Activated CD8-positive, alpha-beta T cell treated with anti-CD3 and anti-CD28 coated beads, Interleukin-2, amount 10 ng/mL, durations not matched to agents 7 days and 5 days (primary cell): ENCODE measurements at regions of chr12 and their contacts with region 1.

Region 1: DNA sequence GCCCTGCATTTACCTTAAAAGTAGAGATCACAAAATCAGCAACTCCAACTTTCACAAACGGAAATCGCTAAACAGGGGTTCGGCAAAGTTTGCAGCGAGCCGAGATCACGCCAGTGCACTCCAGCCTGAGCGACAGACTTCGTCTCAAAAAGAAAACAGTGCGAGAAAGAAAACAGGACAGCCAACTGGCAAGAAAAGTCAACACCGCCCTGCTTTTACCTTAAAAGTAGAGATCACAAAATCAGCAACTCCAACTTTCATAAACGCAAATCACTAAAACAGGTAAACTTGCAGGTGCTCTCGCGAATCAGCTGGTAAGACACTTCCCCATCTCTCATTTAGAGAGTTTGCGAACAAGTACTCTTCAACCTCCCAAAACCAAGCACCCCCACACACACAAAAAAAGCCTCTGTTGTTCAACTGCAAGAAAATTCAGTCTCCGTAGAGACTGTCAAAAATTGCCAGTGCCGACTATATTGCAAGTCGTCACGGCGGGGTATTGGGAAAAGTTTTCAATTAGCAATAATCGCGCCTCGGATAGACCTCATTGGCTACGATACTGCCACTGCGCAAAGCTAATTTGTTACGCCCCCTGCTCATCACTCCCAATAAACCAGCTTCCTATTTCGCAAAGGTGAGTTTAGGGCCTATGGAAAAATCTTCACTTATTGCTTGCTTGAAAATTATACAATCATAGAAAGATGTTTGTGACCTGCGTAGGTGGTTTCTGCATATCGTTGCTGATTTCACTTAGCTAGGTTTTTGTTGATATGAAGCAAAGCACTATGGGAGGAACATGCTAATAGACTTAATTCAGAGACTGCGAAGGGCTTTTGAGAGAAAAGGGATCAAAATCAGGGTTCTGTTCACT is at the start of gene RNU4-1:
- DNase-seq: peak; percentile 88
- ATAC-seq: peak; percentile 50
- H3K4me3 Mint-ChIP-seq: no peak within 1 kb of the TSS
- H3K27ac Mint-ChIP-seq: no peak within 1 kb of the TSS
- H3K4me1 Mint-ChIP-seq: peaks cover 5% of the 10 kb centered on the region
- H3K27me3 Mint-ChIP-seq: no peaks in the 10 kb centered on the region
- total RNA-seq, gene RNU4-1: 1,409 to 2,335 TPM

Region 2: GRCh38 chr12:119704065-119704747 is 588.7 kb before region 1 on chr12:
- CTCF ChIA-PET with region 1: no interaction called
- POLR2A ChIA-PET with region 1: no interaction called
- DNase-seq: no peak
- ATAC-seq: no peak
- H3K4me3 Mint-ChIP-seq: no peak overlapping the region
- H3K27ac Mint-ChIP-seq: no peak overlapping the region
- H3K4me1 Mint-ChIP-seq: no peaks in the 10 kb centered on the region
- H3K27me3 Mint-ChIP-seq: no peaks in the 10 kb centered on the region

Region 3: GRCh38 chr12:119988782-119989668 is 303.9 kb before region 1 on chr12 and contains the start of gene BICDL1:
- CTCF ChIA-PET with region 1: no interaction called
- POLR2A ChIA-PET with region 1: interaction called, 17 read pairs
- DNase-seq: peak; percentile 97
- ATAC-seq: peak; percentile 87
- H3K4me3 Mint-ChIP-seq: peak within 1 kb of the TSS; percentile 86
- H3K27ac Mint-ChIP-seq: peak within 1 kb of the TSS; percentile 80
- H3K4me1 Mint-ChIP-seq: peaks cover 34% of the 10 kb centered on the region
- H3K27me3 Mint-ChIP-seq: peaks cover 2% of the 10 kb centered on the region
- total RNA-seq, gene BICDL1: 62.4 to 64.8 TPM

Region 4: DNA sequence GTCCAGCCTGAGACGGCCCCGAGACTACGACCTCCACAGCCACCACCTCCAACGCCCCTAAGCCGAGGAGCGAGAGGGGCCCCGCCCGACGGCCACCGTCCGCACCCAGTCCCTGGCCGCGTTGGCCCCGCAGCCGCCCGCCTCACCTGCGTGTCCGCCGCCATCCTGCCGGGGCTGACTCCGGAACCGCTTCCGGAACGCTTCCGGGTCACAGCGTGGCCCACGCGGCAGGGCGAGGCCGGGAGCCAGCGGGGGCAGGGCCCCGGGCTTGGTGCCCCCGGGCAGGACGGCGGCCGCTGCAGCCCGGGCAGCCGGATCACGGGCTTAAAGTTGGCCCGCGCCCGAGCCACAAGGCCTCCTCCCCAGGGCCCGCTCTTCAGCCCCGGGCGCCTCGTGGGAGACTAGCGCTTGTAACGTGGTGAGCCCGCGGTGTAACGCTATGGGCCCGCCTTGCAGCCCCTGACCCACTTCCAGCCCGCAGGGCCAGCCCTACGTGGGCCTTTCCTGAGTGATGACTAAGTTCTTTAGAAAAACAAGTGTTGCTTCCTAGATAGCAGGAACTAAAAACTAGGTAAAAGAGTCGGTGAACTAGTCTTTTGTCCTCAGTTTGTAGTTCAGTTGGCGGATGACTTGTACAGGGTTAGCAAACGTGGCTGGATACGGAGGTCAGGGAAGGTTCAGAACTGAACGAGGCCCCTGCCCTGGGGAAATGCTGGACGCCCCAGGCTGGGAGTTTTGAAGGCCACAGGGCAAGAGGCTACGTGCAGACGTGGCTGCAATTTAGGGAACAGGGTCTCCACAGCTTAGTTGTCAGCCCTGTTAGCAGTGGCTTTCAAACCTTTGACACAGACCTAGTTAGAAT is 98.1 kb before region 1 on chr12 and contains the start of gene GCN1:
- CTCF ChIA-PET with region 1: no interaction called
- POLR2A ChIA-PET with region 1: interaction called, 164 read pairs
- DNase-seq: peak; percentile 88
- ATAC-seq: peak; percentile 84
- H3K4me3 Mint-ChIP-seq: peak within 1 kb of the TSS; percentile 89
- H3K27ac Mint-ChIP-seq: peak within 1 kb of the TSS; percentile 93
- H3K4me1 Mint-ChIP-seq: peaks cover 57% of the 10 kb centered on the region
- H3K27me3 Mint-ChIP-seq: no peaks in the 10 kb centered on the region
- total RNA-seq, gene GCN1: 109 to 112 TPM

Region 5: GRCh38 chr12:120228291-120229070 is 64.4 kb before region 1 on chr12:
- CTCF ChIA-PET with region 1: interaction called, 89 read pairs
- POLR2A ChIA-PET with region 1: interaction called, 329 read pairs
- DNase-seq: peak; percentile 91
- ATAC-seq: peak; percentile 83
- H3K4me3 Mint-ChIP-seq: peak overlapping the region; percentile 40
- H3K27ac Mint-ChIP-seq: peak overlapping the region; percentile 85
- H3K4me1 Mint-ChIP-seq: peaks cover 90% of the 10 kb centered on the region
- H3K27me3 Mint-ChIP-seq: no peaks in the 10 kb centered on the region

Region 6: DNA sequence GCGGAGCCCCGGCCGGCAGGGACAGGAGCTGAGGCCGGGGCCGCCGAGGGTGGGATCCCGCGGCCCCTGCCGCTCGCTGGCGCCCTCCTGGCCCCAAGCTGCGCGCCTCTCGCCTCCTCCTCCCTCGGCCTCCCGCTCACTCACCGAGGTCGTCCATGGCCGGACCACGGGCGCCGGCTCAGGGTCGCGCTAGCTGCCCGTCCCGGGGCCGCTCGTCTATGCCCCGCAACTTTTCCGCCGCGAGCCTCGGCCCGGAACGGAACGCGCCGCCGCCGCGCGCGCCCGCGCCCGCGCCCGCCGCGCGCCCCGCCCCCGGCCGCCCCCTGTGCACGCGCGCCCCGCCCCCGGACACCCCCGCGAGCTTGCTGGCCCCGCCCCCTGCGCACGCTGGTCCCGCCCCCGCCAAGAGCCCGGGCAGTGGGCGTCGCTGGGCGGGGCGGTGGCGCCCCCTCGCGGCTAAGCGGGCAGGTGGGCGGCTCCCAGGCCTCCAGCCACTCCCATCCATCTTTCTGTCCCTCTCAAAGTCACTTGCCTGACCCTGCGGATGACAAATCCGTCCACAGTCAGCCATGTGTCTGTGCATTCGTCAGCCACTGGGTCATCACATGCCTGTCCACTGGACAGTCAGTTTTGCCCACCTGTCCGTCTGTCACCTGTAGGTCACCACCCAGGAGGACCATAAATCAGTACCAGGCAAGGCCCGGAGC is 27.3 kb before region 1 on chr12 and contains the start of gene PXN:
- CTCF ChIA-PET with region 1: interaction called, 8 read pairs
- POLR2A ChIA-PET with region 1: interaction called, 224 read pairs
- DNase-seq: peak; percentile 92
- ATAC-seq: peak; percentile 92
- H3K4me3 Mint-ChIP-seq: peak within 1 kb of the TSS; percentile 81
- H3K27ac Mint-ChIP-seq: peak within 1 kb of the TSS; percentile 77
- H3K4me1 Mint-ChIP-seq: peaks cover 47% of the 10 kb centered on the region
- H3K27me3 Mint-ChIP-seq: no peaks in the 10 kb centered on the region
- total RNA-seq, gene PXN: 123 to 127 TPM

Region 7: GRCh38 chr12:120327593-120327992 is 34.7 kb after region 1 on chr12 and contains the start of gene PLA2G1B:
- CTCF ChIA-PET with region 1: no interaction called
- POLR2A ChIA-PET with region 1: interaction called, 27 read pairs
- DNase-seq: no peak
- ATAC-seq: no peak
- H3K4me3 Mint-ChIP-seq: no peak within 1 kb of the TSS
- H3K27ac Mint-ChIP-seq: no peak within 1 kb of the TSS
- H3K4me1 Mint-ChIP-seq: peaks cover 7% of the 10 kb centered on the region
- H3K27me3 Mint-ChIP-seq: no peaks in the 10 kb centered on the region
- total RNA-seq, gene PLA2G1B: not detected

Region 8: GRCh38 chr12:120339256-120339655 is 46.4 kb after region 1 on chr12:
- CTCF ChIA-PET with region 1: no interaction called
- POLR2A ChIA-PET with region 1: no interaction called
- DNase-seq: no peak
- ATAC-seq: no peak
- H3K4me3 Mint-ChIP-seq: no peak overlapping the region
- H3K27ac Mint-ChIP-seq: no peak overlapping the region
- H3K4me1 Mint-ChIP-seq: no peaks in the 10 kb centered on the region
- H3K27me3 Mint-ChIP-seq: peaks cover 10% of the 10 kb centered on the region

Region 9: GRCh38 chr12:120413901-120414695 is 121.2 kb after region 1 on chr12:
- CTCF ChIA-PET with region 1: no interaction called
- POLR2A ChIA-PET with region 1: no interaction called
- DNase-seq: no peak
- ATAC-seq: no peak
- H3K4me3 Mint-ChIP-seq: no peak overlapping the region
- H3K27ac Mint-ChIP-seq: no peak overlapping the region
- H3K4me1 Mint-ChIP-seq: no peaks in the 10 kb centered on the region
- H3K27me3 Mint-ChIP-seq: peaks cover 11% of the 10 kb centered on the region

Region 10: GRCh38 chr12:120534203-120534702 is 241.4 kb after region 1 on chr12 and contains the start of gene RNF10:
- CTCF ChIA-PET with region 1: no interaction called
- POLR2A ChIA-PET with region 1: interaction called, 12 read pairs
- DNase-seq: peak; percentile 83
- ATAC-seq: peak; percentile 75
- H3K4me3 Mint-ChIP-seq: peak within 1 kb of the TSS; percentile 88
- H3K27ac Mint-ChIP-seq: peak within 1 kb of the TSS; percentile 87
- H3K4me1 Mint-ChIP-seq: peaks cover 52% of the 10 kb centered on the region
- H3K27me3 Mint-ChIP-seq: no peaks in the 10 kb centered on the region
- total RNA-seq, gene RNF10: 192 to 204 TPM